Activated B cell treated with CpG ODN at 0.5 μM for 24 hours (primary cell): ENCODE measurements at regions of chr17 and their contacts with region 1.

Region 1: DNA sequence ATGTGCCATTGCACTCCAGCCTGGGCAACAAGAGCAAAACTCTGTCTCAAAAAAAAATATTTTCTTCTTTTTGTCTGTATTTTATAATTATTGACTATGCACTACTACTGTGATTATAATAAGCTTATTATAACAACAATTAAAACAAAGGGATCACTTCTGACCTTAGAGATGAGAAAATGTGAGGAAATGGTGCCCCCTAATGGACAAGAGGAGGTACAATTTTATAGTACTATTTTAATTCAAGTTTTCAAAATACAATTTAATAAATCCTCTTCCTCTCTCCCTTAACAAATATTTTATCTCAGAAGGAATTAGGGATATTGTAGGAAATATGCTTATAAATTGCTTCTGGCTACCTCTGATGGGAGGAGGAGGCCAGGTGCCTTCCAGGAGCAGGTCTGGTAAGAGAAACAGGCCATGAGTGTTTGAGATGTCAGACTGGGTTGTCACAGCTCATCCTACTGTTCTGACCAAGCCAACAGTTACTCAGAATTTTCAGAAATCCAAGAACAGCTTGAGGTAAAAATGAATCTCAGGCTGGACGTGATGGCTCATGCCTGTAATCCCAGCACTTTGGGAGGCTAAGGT is 14.0 kb downstream of the VPS53 start:
- DNase-seq: no peak
- ATAC-seq: no peak
- H3K4me3 Mint-ChIP-seq: no peak overlapping the region
- H3K27ac Mint-ChIP-seq: no peak overlapping the region
- H3K4me1 Mint-ChIP-seq: no peaks in the 10 kb centered on the region
- H3K27me3 Mint-ChIP-seq: no peaks in the 10 kb centered on the region
- CTCF ChIP-seq: peak; percentile 61

Region 2: GRCh38 chr17:143782-144281 is 556.8 kb before region 1 on chr17:
- CTCF ChIA-PET with region 1: interaction called, 6 read pairs
- POLR2A ChIA-PET with region 1: no interaction called
- intact Hi-C with region 1: loop called (anchors 5 kb)
- DNase-seq: peak; percentile 82
- ATAC-seq: peak; percentile 98
- H3K4me3 Mint-ChIP-seq: no peak overlapping the region
- H3K27ac Mint-ChIP-seq: no peak overlapping the region
- H3K4me1 Mint-ChIP-seq: peaks cover 4% of the 10 kb centered on the region
- H3K27me3 Mint-ChIP-seq: peaks cover 3% of the 10 kb centered on the region
- CTCF ChIP-seq: peak; percentile 42

Region 3: DNA sequence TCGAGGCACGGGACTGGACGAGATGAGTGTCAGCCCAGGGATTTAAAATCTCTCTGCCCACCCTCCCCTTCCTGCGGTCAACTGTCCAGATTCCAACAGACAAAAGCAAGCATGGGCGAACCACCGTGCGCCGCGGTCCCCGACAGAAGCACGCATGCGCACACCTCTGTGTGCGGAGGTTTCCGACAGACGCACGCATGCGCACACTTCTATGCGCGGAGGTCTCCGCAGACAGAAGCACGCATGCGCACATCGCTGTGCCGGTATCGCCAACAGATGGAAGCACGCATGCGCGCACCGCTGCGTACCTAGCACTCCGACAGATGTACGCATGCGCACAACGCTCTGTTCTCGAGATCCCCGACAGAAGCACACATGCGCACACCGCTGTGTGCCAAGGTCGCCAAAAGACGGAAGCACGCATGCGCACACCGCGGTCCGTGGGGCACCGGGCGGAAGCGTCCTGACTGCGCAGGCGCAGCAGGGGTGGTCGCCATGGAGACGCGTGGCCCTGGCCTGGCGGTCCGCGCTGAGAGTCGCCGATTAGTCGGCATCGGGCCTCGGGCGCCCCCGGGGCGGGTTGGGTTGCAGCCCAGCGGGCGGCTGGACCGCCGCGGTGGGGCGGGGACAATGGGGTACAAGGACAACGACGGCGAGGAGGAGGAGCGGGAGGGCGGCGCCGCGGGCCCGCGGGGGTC is 290.6 kb before region 1 on chr17:
- CTCF ChIA-PET with region 1: interaction called, 86 read pairs
- POLR2A ChIA-PET with region 1: interaction called, 7 read pairs
- intact Hi-C with region 1: loop called (anchors 1 kb)
- DNase-seq: peak; percentile 99
- ATAC-seq: peak; percentile 84
- H3K4me3 Mint-ChIP-seq: peak overlapping the region; percentile 88
- H3K27ac Mint-ChIP-seq: peak overlapping the region; percentile 91
- H3K4me1 Mint-ChIP-seq: peaks cover 47% of the 10 kb centered on the region
- H3K27me3 Mint-ChIP-seq: no peaks in the 10 kb centered on the region
- CTCF ChIP-seq: no peak

Region 4: DNA sequence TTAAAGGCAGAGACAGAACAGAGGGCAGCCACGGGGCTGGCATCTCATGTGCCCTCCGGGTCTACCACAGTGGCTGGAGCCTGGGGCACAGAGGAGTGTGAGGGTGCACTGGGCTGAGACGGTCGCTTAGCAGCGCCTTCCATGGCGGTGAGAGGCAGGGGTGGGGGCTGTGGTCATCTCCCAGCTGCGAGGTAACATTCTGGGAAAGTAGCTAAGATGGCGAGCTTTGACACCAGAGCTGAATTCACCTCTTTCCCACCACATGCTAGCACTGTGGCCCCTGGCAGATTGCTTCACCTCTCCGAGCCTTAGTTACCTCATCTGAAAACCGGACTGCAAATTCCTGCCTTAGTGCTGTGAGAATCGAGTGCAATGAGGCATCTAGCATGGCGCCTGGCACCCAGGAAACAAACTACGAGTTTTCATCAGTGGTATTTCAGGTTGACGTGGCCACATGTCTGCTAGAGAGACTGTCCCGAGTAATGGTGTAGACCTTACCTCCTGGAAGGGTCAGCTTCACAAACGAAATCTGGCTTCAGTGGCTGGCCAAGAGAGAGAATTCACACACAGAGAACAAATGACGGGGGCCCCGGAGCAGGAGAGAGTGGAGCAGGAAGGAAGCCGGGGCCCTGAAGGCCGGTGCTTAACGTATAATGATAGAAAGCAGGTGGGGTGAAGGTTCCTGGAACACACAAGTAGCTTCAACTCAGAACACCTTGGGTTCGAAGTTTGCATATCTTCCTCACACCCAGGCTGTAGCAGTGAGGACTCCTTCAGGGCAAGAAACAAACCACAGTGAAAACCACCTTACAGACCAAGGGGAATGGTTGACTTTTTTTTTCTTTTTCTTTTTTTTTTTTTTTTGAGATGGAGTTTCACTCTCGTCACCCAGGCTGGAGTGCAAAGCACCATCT is 284.0 kb before region 1 on chr17:
- CTCF ChIA-PET with region 1: interaction called, 86 read pairs
- POLR2A ChIA-PET with region 1: interaction called, 7 read pairs
- intact Hi-C with region 1: loop called (anchors 1 kb)
- DNase-seq: no peak
- ATAC-seq: peak; percentile 81
- H3K4me3 Mint-ChIP-seq: peak overlapping the region; percentile 78
- H3K27ac Mint-ChIP-seq: peak overlapping the region; percentile 88
- H3K4me1 Mint-ChIP-seq: peaks cover 39% of the 10 kb centered on the region
- H3K27me3 Mint-ChIP-seq: peaks cover 27% of the 10 kb centered on the region
- CTCF ChIP-seq: no peak

Region 5: DNA sequence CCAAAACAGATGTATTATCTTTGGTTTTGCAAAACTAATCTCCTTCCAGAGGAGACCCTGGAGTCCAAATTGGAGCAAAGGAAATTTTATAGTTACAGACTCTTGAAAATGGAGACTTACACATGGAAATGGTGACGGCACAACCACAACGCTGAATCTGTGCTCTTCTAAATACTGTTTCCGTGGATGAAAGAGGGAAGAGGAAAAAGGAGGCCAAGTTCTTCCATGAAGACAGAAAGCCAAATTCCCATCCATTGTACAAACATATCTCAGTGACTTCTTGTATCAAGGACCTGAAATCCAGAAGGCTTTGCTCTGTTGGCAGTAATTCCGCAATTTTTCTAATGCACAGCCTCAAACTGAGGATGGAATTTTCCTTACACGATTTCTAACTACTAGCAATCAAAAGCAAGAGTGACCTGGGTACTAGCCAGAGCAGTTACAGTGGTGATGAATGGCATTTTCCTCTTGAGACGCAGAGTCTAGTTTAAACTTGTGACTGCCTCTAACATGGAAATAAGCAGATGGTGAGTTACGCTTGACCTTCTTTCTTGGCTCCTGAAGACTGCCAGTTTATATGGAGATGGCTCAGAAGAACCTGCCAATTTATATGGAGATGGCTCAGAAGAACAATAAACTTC is 24.4 kb before region 1 on chr17:
- CTCF ChIA-PET with region 1: no interaction called
- POLR2A ChIA-PET with region 1: no interaction called
- intact Hi-C with region 1: no loop called
- DNase-seq: no peak
- ATAC-seq: no peak
- H3K4me3 Mint-ChIP-seq: no peak overlapping the region
- H3K27ac Mint-ChIP-seq: no peak overlapping the region
- H3K4me1 Mint-ChIP-seq: no peaks in the 10 kb centered on the region
- H3K27me3 Mint-ChIP-seq: no peaks in the 10 kb centered on the region
- CTCF ChIP-seq: no peak

Region 6: GRCh38 chr17:801660-802059 is 101.1 kb after region 1 on chr17:
- CTCF ChIA-PET with region 1: no interaction called
- POLR2A ChIA-PET with region 1: no interaction called
- intact Hi-C with region 1: no loop called
- DNase-seq: no peak
- ATAC-seq: no peak
- H3K4me3 Mint-ChIP-seq: no peak overlapping the region
- H3K27ac Mint-ChIP-seq: no peak overlapping the region
- H3K4me1 Mint-ChIP-seq: no peaks in the 10 kb centered on the region
- H3K27me3 Mint-ChIP-seq: no peaks in the 10 kb centered on the region
- CTCF ChIP-seq: no peak

Region 7: DNA sequence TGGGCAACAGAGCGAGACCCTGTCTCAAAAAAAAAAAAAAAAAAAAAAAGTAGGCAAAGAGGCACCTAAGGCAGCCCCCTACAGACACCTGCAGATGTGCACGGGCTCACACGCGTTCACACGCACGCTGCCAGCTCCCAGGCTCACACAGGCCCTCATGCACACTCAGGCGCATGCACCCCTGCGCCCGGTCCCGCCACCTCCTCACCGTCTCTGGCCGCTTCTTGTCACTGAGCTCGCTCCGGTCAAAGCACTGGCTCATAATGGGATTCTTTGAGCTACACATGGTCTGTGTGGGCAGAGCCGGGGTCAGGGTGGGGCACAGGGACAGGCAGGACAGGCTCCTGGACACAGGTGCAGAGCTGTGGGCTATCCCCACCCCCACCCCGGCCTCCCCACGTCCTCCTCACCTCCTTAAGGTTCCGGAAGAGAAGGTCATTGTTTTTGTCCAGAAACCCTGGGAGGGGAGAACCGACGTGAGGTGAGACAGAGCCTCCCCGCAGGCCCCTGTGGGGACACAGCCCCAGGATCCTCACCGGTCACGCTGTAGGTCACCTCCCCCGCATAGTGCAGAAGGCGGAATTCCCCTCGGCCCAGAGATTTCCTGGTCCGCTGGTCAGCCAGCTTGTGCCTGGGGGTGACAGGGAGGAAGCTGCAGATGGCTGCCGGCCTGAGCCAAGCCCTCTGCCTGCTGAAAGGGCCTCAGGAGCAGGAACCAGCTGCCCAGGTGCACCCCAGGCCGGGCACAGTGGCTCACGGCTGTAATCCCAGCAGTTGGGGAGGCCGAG is 774.0 kb after region 1 on chr17:
- CTCF ChIA-PET with region 1: no interaction called
- POLR2A ChIA-PET with region 1: no interaction called
- intact Hi-C with region 1: no loop called
- DNase-seq: peak; percentile 58
- ATAC-seq: peak; percentile 64
- H3K4me3 Mint-ChIP-seq: peak overlapping the region; percentile 70
- H3K27ac Mint-ChIP-seq: peak overlapping the region; percentile 79
- H3K4me1 Mint-ChIP-seq: peaks cover 56% of the 10 kb centered on the region
- H3K27me3 Mint-ChIP-seq: no peaks in the 10 kb centered on the region
- CTCF ChIP-seq: no peak